ENCODE measurements at regions of chr1 and their contacts with region 1.

Region 1: DNA sequence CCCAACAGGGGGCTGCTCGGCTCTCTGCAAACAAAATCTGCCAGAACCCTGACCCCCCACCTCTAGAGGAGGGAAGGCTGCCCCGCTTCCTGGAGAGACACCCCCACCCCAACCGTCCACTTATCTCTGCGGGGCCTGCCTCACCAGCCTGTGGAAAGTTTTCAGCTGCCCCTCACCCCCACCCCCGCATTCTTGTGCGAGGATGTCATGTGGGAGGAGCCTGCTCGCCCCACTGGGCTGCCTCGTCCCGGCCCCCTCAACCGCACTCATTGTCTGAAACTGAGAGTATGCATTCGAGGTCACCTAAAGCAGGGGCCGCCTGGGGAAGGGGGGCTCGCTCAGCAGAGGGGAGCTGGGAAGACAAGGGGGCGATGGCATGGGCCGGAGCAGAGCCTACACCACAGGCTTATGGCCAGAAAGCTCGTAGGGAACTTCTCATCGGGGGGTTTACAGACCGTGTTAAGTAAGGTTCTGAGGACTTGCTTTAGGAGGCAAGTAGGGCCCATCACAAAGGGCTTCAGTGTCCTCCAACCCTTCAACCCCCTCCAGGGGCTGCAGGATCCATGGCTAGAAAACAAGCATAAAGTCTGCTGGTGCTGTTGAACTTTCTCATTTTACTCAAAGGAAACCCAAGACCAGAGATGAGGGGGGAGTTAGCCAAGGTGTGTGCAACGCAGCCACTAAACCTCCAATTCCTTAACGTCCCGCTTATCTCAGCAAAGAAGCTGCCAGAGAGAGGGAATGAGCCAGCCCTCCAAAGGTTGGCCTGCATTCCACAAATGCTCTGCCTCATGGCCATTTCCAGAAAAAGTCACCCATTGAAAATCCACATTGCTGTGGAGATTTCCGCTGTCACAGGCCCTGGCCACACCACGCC is 9.4 kb downstream of the EPHA2 start:
- DNase-seq: peak; percentile 72 to 91
- H3K4me3 ChIP-seq: peak overlapping the region; percentile 3 to 49 (median 28); a peak in 7 of 8 replicates
- H3K27ac ChIP-seq: peak overlapping the region; percentile 69; the same call in 1 of the 2 replicates
- H3K4me1 ChIP-seq: peaks cover 18 to 49% (median 36%) of the 10 kb centered on the region in 4 experiments
- H3K27me3 ChIP-seq: no peaks in the 10 kb centered on the region
- CTCF ChIP-seq: no peak
- EP300 ChIP-seq: no peak
- POLR2A ChIP-seq: peak in 1 of 2 experiments; percentile 44; a peak in 1 of 3 replicates
- RAD21 ChIP-seq: no peak; a peak in 1 of 4 replicates

Region 2: GRCh38 chr1:15994590-15995351 is 151.7 kb before region 1 on chr1:
- CTCF ChIA-PET with region 1: no interaction called
- POLR2A ChIA-PET with region 1: no interaction called
- DNase-seq: no peak
- H3K4me3 ChIP-seq: no peak overlapping the region
- H3K27ac ChIP-seq: no peak overlapping the region
- H3K4me1 ChIP-seq: no peaks in the 10 kb centered on the region
- H3K27me3 ChIP-seq: peaks cover 0 to 3% (median 0%) of the 10 kb centered on the region in 4 experiments; a peak in 1 of 7 replicates
- CTCF ChIP-seq: peak; percentile 64 to 71 (median 67)
- EP300 ChIP-seq: no peak
- POLR2A ChIP-seq: no peak
- RAD21 ChIP-seq: peak; percentile 53 to 68

Region 3: DNA sequence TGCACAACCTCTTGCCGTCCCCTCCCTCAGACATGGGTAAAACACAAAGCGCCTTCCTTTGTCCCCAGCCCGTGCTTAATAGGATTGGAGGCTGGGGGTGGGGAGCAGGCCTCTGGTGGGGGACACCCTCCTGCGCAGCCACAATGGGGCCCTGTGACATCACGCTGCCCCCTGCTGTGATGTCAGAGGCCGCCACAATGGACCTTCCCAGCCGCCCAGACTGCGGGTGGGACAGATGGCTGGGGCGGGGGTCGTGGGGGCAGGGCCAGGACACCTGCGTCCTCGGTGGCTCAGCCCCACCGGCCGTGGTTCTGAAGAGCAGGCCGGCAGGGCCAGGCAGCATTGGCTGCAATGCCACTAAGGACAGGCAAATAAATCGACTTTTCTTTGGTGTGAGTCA is 30.5 kb before region 1 on chr1:
- CTCF ChIA-PET with region 1: interaction called, 11 read pairs
- POLR2A ChIA-PET with region 1: interaction called, 51 read pairs
- DNase-seq: peak; percentile 56 to 87
- H3K4me3 ChIP-seq: peak overlapping the region in 1 of 4 experiments; percentile 32; a peak in 2 of 8 replicates
- H3K27ac ChIP-seq: no peak overlapping the region
- H3K4me1 ChIP-seq: peaks cover 20 to 47% (median 33%) of the 10 kb centered on the region in 4 experiments
- H3K27me3 ChIP-seq: no peaks in the 10 kb centered on the region
- CTCF ChIP-seq: no peak
- EP300 ChIP-seq: peak; percentile 13 to 94; a peak in 2 of 3 replicates
- POLR2A ChIP-seq: no peak
- RAD21 ChIP-seq: no peak; a peak in 1 of 4 replicates

Region 4: GRCh38 chr1:16122916-16123315 is 23.6 kb before region 1 on chr1:
- CTCF ChIA-PET with region 1: interaction called, 11 read pairs
- POLR2A ChIA-PET with region 1: interaction called, 51 read pairs
- DNase-seq: no peak
- H3K4me3 ChIP-seq: no peak overlapping the region
- H3K27ac ChIP-seq: no peak overlapping the region
- H3K4me1 ChIP-seq: peaks cover 0 to 18% (median 10%) of the 10 kb centered on the region in 4 experiments; a peak in 5 of 7 replicates
- H3K27me3 ChIP-seq: no peaks in the 10 kb centered on the region
- CTCF ChIP-seq: no peak
- EP300 ChIP-seq: no peak
- POLR2A ChIP-seq: no peak
- RAD21 ChIP-seq: no peak

Region 5: DNA sequence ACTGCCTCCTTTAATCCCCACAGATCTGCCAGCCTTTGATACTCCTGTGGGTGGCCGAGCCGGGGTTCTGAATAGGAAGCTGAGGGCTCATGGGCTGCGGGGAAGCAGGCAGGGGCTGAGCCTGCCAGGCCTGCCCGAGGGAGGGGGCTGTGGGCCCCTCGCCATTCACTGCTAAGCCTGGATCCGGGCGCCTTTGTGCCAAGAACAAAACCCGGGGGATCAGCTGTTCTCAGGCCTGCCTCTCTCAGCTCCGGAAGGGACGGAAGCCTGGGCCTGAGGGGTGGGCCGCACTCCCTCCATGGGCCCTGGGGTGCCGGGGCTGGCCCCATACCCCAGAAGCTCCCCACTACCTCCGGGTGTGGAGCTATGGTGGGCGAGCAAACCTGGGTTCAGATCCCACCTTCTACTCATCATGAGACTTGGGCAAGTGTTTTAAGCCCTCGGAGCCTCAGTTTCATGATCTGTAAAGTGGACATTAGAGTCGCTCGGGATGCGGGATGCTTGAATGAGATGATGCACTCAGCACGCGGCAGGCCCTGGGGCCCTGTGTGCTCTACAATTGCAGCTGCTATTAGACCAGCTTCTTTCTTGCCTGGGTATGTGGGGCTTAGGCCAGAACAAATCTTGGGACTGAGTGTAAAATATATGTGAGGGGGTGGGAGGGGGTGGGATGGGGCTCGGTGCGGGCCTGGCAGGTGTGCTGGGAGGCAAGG is 28.5 kb after region 1 on chr1:
- CTCF ChIA-PET with region 1: no interaction called
- POLR2A ChIA-PET with region 1: no interaction called
- DNase-seq: no peak
- H3K4me3 ChIP-seq: no peak overlapping the region
- H3K27ac ChIP-seq: no peak overlapping the region
- H3K4me1 ChIP-seq: peaks cover 0 to 18% (median 8%) of the 10 kb centered on the region in 4 experiments; a peak in 6 of 7 replicates
- H3K27me3 ChIP-seq: no peaks in the 10 kb centered on the region; a peak in 1 of 7 replicates
- CTCF ChIP-seq: no peak
- EP300 ChIP-seq: no peak
- POLR2A ChIP-seq: no peak
- RAD21 ChIP-seq: no peak